ENCODE measurements at regions of chr10 and their contacts with region 1.

Region 1: GRCh38 chr10:103752680-103753248 is 102.6 kb downstream of the SH3PXD2A start:
- DNase-seq: no peak
- H3K27ac ChIP-seq: no peak overlapping the region
- CTCF ChIP-seq: peak; percentile 69

Region 2: GRCh38 chr10:103765981-103766380 is 13.2 kb after region 1 on chr10:
- CTCF ChIA-PET with region 1: interaction called, 14 read pairs
- POLR2A ChIA-PET with region 1: interaction called, 4 read pairs
- DNase-seq: no peak
- H3K27ac ChIP-seq: peak overlapping the region; percentile 59
- CTCF ChIP-seq: no peak

Region 3: DNA sequence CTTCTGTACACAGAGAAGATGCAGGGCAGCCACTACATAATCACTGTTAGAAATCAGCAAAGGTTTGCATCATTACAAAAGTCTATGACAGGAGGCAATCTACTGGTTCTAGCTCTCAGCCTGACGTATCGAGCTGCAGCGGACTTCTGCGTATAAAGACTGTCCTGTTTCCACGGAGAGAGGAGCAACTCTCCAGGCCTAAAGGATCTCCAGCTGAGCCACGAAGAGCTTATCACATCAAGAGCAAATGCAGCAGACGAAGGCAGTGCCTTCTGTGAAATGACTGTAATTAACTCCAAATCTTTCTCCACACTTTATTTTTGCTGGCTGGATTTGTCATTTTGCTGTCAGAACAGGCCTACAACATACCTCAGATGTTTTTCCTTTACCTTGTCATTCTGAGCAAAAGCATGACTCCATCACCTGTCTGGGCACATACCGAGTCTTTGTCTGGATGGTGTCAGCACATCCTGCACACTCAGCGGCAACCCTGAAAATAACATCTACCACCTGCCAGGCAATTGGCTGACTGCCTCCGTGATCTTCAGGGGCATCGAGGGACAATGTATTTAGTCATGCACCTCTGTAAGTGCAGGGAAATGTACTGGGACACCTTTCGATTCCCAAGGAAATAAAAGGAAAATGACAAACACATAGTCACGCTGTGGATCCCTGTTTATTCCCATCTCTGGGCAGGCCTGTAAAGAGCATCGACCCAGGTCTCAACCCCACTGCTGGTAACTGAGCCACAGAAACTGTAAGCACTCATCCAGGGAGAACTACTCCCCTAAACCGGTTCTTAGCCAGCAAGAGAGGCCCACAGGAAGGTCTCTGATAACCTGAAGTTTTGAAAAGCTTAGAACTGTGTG is 128.9 kb after region 1 on chr10:
- CTCF ChIA-PET with region 1: no interaction called
- POLR2A ChIA-PET with region 1: no interaction called
- DNase-seq: peak; percentile 96
- H3K27ac ChIP-seq: peak overlapping the region; percentile 96
- CTCF ChIP-seq: no peak

Measured in RWPE1 (cell line).